A673 (cell line): ENCODE measurements at regions of chr14 and their contacts with region 1.

Region 1: GRCh38 chr14:21263656-21264411 is 5.4 kb downstream of the HNRNPC start:
- DNase-seq: peak; percentile 45
- H3K4me3 ChIP-seq: peak overlapping the region; percentile 2
- H3K27ac ChIP-seq: peak overlapping the region; percentile 39
- H3K4me1 ChIP-seq: peaks cover 52% of the 10 kb centered on the region
- H3K27me3 ChIP-seq: no peaks in the 10 kb centered on the region
- CTCF ChIP-seq: no peak

Region 2: GRCh38 chr14:20997115-20997514 is 266.7 kb before region 1 on chr14:
- CTCF ChIA-PET with region 1: no interaction called
- POLR2A ChIA-PET with region 1: interaction called, 23 read pairs
- intact Hi-C with region 1: no loop called
- DNase-seq: no peak
- H3K4me3 ChIP-seq: no peak overlapping the region
- H3K27ac ChIP-seq: no peak overlapping the region
- H3K4me1 ChIP-seq: peaks cover 8% of the 10 kb centered on the region
- H3K27me3 ChIP-seq: no peaks in the 10 kb centered on the region
- CTCF ChIP-seq: no peak